MCF 10A (cell line): ENCODE measurements at regions of chr12 and their contacts with region 1.

Region 1: DNA sequence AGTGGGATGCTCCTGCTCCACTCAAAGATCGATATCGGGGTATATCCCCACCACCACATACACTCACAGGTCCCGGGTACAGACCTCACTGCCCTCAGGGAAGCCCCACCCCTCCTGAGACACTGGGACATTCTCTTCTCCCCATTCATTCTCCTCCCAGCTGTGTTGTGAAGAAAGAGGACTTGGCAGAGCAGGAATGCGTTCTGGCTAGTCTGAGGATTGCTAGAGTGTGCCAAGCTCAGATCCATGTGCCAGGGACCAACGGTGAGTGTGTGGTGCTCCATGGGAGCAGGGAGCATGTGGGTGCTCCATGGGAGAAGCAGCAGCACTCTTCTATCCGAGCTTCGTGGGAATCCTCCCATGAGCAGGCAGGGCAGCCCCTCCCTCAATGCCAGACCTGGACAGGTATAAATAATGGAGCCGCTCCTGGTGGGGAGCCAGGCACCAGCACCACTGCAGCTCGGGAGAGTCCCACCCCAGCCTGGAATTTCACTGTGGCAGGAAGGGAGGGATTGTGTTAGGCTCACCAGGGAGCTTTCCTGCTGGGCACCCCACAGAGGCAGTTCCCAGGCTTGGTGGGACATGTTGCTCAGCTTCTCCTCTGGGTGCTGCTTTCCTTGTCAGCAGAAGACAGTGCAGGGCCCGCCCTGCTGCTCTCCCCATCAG is 2.3 kb upstream of the KRT5 start:
- DNase-seq: peak; percentile 98
- H3K4me3 Mint-ChIP-seq: peak overlapping the region; percentile 80
- H3K27ac Mint-ChIP-seq: peak overlapping the region; percentile 96
- H3K4me1 Mint-ChIP-seq: peaks cover 44% of the 10 kb centered on the region
- H3K27me3 Mint-ChIP-seq: no peaks in the 10 kb centered on the region
- CTCF ChIP-seq: no peak

Region 2: GRCh38 chr12:52139552-52140062 is 382.9 kb before region 1 on chr12:
- CTCF ChIA-PET with region 1: interaction called, 7 read pairs
- POLR2A ChIA-PET with region 1: interaction called, 373 read pairs
- intact Hi-C with region 1: no loop called
- DNase-seq: peak; percentile 75
- H3K4me3 Mint-ChIP-seq: no peak overlapping the region
- H3K27ac Mint-ChIP-seq: no peak overlapping the region
- H3K4me1 Mint-ChIP-seq: peaks cover 25% of the 10 kb centered on the region
- H3K27me3 Mint-ChIP-seq: no peaks in the 10 kb centered on the region
- CTCF ChIP-seq: peak; percentile 97

Region 3: GRCh38 chr12:52171950-52172512 is 350.4 kb before region 1 on chr12:
- CTCF ChIA-PET with region 1: no interaction called
- POLR2A ChIA-PET with region 1: interaction called, 16 read pairs
- intact Hi-C with region 1: no loop called
- DNase-seq: peak; percentile 80
- H3K4me3 Mint-ChIP-seq: no peak overlapping the region
- H3K27ac Mint-ChIP-seq: peak overlapping the region; percentile 64
- H3K4me1 Mint-ChIP-seq: peaks cover 45% of the 10 kb centered on the region
- H3K27me3 Mint-ChIP-seq: no peaks in the 10 kb centered on the region
- CTCF ChIP-seq: peak; percentile 39

Region 4: GRCh38 chr12:52442600-52443061 is 79.8 kb before region 1 on chr12:
- CTCF ChIA-PET with region 1: no interaction called
- POLR2A ChIA-PET with region 1: no interaction called
- intact Hi-C with region 1: loop called (anchors 5 kb)
- DNase-seq: peak; percentile 98
- H3K4me3 Mint-ChIP-seq: no peak overlapping the region
- H3K27ac Mint-ChIP-seq: no peak overlapping the region
- H3K4me1 Mint-ChIP-seq: peaks cover 35% of the 10 kb centered on the region
- H3K27me3 Mint-ChIP-seq: no peaks in the 10 kb centered on the region
- CTCF ChIP-seq: no peak

Region 5: GRCh38 chr12:52695039-52695438 is 172.6 kb after region 1 on chr12:
- CTCF ChIA-PET with region 1: no interaction called
- POLR2A ChIA-PET with region 1: no interaction called
- intact Hi-C with region 1: no loop called
- DNase-seq: no peak
- H3K4me3 Mint-ChIP-seq: no peak overlapping the region
- H3K27ac Mint-ChIP-seq: no peak overlapping the region
- H3K4me1 Mint-ChIP-seq: no peaks in the 10 kb centered on the region
- H3K27me3 Mint-ChIP-seq: peaks cover 64% of the 10 kb centered on the region
- CTCF ChIP-seq: no peak

Region 6: GRCh38 chr12:52812749-52813148 is 290.3 kb after region 1 on chr12:
- CTCF ChIA-PET with region 1: no interaction called
- POLR2A ChIA-PET with region 1: no interaction called
- intact Hi-C with region 1: no loop called
- DNase-seq: no peak
- H3K4me3 Mint-ChIP-seq: no peak overlapping the region
- H3K27ac Mint-ChIP-seq: no peak overlapping the region
- H3K4me1 Mint-ChIP-seq: peaks cover 6% of the 10 kb centered on the region
- H3K27me3 Mint-ChIP-seq: peaks cover 38% of the 10 kb centered on the region
- CTCF ChIP-seq: no peak

Region 7: DNA sequence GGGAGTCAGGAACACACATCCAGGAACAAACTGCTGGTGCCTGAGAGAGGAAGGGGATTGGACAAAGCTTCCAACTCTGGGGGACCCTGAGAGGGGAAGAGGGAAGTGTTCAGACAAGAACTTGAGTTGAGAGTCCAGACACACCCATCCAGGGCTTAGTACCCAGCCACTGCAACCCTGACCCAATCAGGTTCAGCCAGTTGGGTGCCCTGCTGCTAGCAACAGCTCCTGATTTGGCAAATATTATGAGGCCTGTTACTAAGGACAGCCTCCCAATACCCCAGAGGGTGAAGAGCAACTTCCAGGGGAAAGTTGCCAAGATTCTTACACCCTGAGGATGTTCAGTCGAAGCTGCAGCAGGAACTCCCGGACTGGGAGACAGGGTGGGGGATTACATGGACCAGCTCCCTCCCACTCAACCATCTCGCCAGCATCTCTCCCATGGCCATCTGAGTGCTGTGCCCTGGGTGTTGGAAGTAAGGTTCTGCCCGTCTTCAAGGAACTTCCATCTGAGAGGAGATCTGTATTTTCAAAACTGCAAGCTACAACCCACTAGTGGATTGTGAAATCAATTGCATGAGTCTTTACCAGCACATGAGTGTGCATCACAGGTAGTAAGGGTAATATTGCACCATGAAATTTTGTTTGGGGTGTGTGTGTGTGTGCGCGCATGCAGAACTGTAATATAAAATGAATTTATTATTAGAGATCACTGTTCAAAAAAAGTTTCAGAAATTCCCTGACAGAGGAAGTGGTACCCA is 337.8 kb after region 1 on chr12:
- CTCF ChIA-PET with region 1: interaction called, 5 read pairs
- POLR2A ChIA-PET with region 1: interaction called, 675 read pairs
- intact Hi-C with region 1: no loop called
- DNase-seq: peak; percentile 83
- H3K4me3 Mint-ChIP-seq: peak overlapping the region; percentile 15
- H3K27ac Mint-ChIP-seq: peak overlapping the region; percentile 99
- H3K4me1 Mint-ChIP-seq: peaks cover 20% of the 10 kb centered on the region
- H3K27me3 Mint-ChIP-seq: no peaks in the 10 kb centered on the region
- CTCF ChIP-seq: no peak